ENCODE measurements at regions of chr3 and their contacts with region 1.

Region 1: GRCh38 chr3:128680602-128681368 is 30.2 kb upstream of the RPN1 start:
- DNase-seq: peak; percentile 99
- H3K4me3 Mint-ChIP-seq: peak overlapping the region; percentile 93
- H3K27ac Mint-ChIP-seq: peak overlapping the region; percentile 99
- H3K4me1 Mint-ChIP-seq: peaks cover 23% of the 10 kb centered on the region
- H3K27me3 Mint-ChIP-seq: no peaks in the 10 kb centered on the region

Region 2: GRCh38 chr3:128617557-128618397 is 63.0 kb before region 1 on chr3:
- intact Hi-C with region 1: loop called (anchors 1 kb)
- DNase-seq: peak; percentile 100
- H3K4me3 Mint-ChIP-seq: peak overlapping the region; percentile 95
- H3K27ac Mint-ChIP-seq: peak overlapping the region; percentile 96
- H3K4me1 Mint-ChIP-seq: peaks cover 34% of the 10 kb centered on the region
- H3K27me3 Mint-ChIP-seq: no peaks in the 10 kb centered on the region

Region 3: GRCh38 chr3:128665362-128666038 is 15.3 kb before region 1 on chr3:
- intact Hi-C with region 1: no loop called
- DNase-seq: no peak
- H3K4me3 Mint-ChIP-seq: no peak overlapping the region
- H3K27ac Mint-ChIP-seq: no peak overlapping the region
- H3K4me1 Mint-ChIP-seq: no peaks in the 10 kb centered on the region
- H3K27me3 Mint-ChIP-seq: peaks cover 20% of the 10 kb centered on the region

Region 4: GRCh38 chr3:128725932-128726690 is 45.3 kb after region 1 on chr3 and contains the start of gene RAB7A:
- intact Hi-C with region 1: loop called (anchors 1 kb)
- DNase-seq: peak; percentile 99
- H3K4me3 Mint-ChIP-seq: peak within 1 kb of the TSS; percentile 92
- H3K27ac Mint-ChIP-seq: peak within 1 kb of the TSS; percentile 94
- H3K4me1 Mint-ChIP-seq: peaks cover 42% of the 10 kb centered on the region
- H3K27me3 Mint-ChIP-seq: peaks cover 4% of the 10 kb centered on the region
- total RNA-seq, gene RAB7A: 338 and 361 TPM in 2 replicates

Region 5: DNA sequence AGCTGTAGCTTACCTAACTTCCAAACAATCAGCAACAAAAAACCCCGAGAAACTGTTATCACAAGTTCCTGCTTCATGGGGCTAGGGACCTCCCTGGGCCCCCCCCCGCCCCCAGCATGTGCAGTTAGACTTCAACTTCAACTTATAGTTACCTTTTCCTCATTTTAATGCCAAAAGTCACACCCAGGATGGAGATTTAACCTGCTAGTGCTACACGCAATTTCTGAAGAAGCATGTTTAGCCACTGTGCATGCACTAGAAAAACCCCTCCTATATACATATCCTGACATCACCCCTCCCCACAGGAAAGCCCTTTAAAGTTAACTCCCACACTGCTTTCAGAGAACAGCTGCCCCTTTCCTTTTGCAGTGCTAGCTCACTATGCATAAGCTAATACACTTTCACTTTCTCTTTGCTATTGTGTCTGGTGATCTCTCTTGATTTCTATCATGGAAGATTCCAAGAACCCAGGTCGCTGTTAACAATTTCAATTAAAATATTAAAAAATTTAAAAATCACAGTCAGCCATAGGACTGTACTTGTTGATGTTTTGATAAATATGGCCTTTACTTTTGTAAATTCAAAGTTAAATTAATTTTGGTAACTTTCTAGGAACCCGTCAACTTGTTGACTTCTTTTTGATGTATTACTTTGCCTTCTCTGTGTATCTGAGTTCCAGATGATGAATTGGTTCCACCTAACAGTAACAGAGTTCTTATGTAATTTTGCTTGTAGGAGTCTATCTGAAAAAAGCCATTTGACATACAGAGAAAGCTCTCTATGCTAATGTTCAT is 123.4 kb after region 1 on chr3:
- intact Hi-C with region 1: loop called (anchors 1 kb)
- DNase-seq: peak; percentile 93
- H3K4me3 Mint-ChIP-seq: peak overlapping the region; percentile 70
- H3K27ac Mint-ChIP-seq: peak overlapping the region; percentile 98
- H3K4me1 Mint-ChIP-seq: peaks cover 78% of the 10 kb centered on the region
- H3K27me3 Mint-ChIP-seq: no peaks in the 10 kb centered on the region

Region 6: DNA sequence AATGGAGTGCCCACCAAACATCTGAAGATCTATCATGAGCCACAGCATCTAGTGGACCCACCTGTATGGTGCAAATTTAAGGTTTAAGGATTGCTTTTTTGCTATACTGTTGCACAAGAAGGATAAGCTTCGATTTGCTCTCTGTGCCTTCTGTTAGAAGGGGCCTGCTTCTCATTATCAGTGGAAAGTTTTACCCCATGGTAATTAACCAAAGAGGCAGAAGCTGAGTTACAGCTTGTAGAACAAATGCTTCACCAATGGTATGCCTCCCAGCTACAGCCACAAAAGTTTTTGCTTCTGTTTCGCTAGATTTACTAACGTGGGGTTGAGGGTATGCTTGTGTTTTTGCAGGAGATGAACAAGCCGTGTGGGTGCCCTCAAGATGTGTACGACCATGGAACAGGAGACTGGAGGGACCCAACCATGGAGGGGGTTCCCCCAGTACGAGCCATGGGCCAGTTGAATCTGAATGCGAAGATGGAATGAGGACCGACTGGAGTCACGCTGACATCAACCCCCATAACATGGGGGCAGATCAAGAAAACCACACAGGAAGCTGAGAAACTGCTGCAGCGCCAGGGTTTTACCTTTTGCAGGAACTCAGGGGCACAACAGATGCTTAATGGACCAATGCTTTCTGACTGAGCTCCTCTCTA is 242.1 kb after region 1 on chr3:
- intact Hi-C with region 1: loop called (anchors 2 kb)
- DNase-seq: peak; percentile 85
- H3K4me3 Mint-ChIP-seq: peak overlapping the region; percentile 74
- H3K27ac Mint-ChIP-seq: peak overlapping the region; percentile 79
- H3K4me1 Mint-ChIP-seq: peaks cover 25% of the 10 kb centered on the region
- H3K27me3 Mint-ChIP-seq: no peaks in the 10 kb centered on the region

Measured in activated CD4-positive, alpha-beta T cell treated with anti-CD3 and anti-CD28 coated beads, Interleukin-2, amount 10 ng/mL, durations not matched to agents 24 days and 14 days (primary cell).